ENCODE measurements at regions of chr3 and their contacts with region 1.

Region 1: GRCh38 chr3:15205934-15206661 is at the start of gene CAPN7:
- DNase-seq: peak; percentile 96
- ATAC-seq: peak; percentile 90
- H3K4me3 ChIP-seq: peak within 1 kb of the TSS; percentile 92
- H3K27ac ChIP-seq: peak within 1 kb of the TSS; percentile 28
- H3K4me1 ChIP-seq: peaks cover 27% of the 10 kb centered on the region
- H3K27me3 ChIP-seq: no peaks in the 10 kb centered on the region
- CTCF ChIP-seq: peak; percentile 46
- total RNA-seq, gene CAPN7: 30.2 and 32.7 TPM in 2 replicates

Region 2: DNA sequence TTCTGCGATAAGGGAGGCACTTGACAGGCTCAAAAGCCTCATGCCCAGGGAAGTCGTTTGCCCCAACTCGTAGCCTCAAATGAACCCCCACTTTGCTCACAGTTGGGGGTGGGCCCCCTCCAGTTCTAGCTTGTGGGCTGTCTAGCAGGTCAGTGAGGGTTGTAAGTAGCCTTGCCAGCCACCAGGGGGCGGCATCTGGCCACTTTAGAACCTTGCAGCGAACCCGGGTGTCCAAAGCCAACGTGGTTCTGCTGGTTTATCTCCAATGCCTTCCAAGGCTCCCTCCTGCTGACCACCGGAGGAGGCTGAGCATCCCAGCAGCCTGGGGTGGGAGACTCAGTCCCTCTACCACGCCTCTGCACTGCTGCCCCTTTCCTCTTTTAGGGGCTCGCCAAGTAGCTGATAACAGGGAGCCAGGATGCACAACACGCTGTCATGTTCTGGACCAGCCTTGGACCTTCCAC is 98.0 kb before region 1 on chr3:
- CTCF ChIA-PET with region 1: interaction called, 5 read pairs
- POLR2A ChIA-PET with region 1: no interaction called
- intact Hi-C with region 1: loop called (anchors 5 kb)
- DNase-seq: peak; percentile 78
- ATAC-seq: peak; percentile 94
- H3K4me3 ChIP-seq: no peak overlapping the region
- H3K27ac ChIP-seq: no peak overlapping the region
- H3K4me1 ChIP-seq: peaks cover under 1% of the 10 kb centered on the region; the same call in 1 of the 2 replicates
- H3K27me3 ChIP-seq: no peaks in the 10 kb centered on the region
- CTCF ChIP-seq: peak; percentile 92

Region 3: DNA sequence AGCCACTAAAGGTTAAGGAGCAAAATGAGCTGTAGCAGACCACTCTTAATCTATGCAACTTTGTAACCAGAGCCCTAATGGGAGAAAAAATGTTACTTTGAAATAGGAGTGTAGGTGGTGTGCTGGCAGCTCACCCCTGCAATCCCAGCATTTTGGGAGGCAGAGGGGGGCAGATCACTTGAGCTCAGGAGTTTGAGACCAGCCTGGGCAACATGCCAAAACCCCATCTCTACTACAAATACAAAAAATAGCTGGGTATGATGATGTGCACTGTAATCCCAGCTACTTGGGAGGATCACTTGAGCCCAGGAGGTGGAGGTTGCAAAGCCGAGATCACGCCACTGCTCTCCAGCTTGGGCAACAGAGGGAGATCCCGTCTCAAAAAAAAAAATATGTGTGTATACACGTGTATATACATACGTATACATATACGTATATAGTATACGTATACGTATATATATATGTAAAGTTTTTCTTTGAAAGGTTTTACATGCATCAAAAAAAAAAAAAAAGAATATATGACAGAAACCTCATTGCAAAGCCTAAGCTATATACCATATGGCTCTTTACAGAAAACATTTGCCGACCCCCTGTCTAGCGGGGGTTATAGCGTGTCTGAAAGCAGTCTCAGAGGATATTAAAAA is 15.6 kb after region 1 on chr3:
- CTCF ChIA-PET with region 1: no interaction called
- POLR2A ChIA-PET with region 1: interaction called, 10 read pairs
- intact Hi-C with region 1: no loop called
- DNase-seq: no peak
- ATAC-seq: no peak
- H3K4me3 ChIP-seq: no peak overlapping the region
- H3K27ac ChIP-seq: no peak overlapping the region
- H3K4me1 ChIP-seq: 0 out of 2 replicates have a peak, but pooled peaks cover 5% of the 10 kb centered on the region
- H3K27me3 ChIP-seq: no peaks in the 10 kb centered on the region
- CTCF ChIP-seq: no peak

Region 4: DNA sequence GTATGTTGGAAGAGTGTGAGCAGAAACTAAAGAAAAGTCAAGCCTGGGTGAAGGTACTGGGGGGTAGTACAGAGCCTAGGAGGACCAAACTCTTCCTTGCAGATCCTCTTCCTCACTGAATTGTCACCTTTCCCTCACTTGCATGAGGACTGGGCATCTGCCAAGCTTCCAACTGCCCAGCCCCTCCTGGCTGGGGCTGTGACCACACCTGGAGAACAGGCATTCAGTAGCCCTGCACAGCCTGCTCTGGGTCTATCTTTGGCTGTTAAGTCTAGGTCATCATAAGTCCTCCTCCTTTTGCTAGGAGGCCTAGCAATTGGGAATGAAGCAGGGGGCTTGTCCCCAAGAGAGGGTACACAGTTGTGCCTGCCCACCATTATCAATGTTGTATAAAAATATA is 55.2 kb after region 1 on chr3:
- CTCF ChIA-PET with region 1: no interaction called
- POLR2A ChIA-PET with region 1: interaction called, 17 read pairs
- intact Hi-C with region 1: no loop called
- DNase-seq: peak; percentile 41
- ATAC-seq: peak; percentile 46
- H3K4me3 ChIP-seq: no peak overlapping the region
- H3K27ac ChIP-seq: no peak overlapping the region
- H3K4me1 ChIP-seq: no peaks in the 10 kb centered on the region
- H3K27me3 ChIP-seq: no peaks in the 10 kb centered on the region
- CTCF ChIP-seq: no peak

Region 5: DNA sequence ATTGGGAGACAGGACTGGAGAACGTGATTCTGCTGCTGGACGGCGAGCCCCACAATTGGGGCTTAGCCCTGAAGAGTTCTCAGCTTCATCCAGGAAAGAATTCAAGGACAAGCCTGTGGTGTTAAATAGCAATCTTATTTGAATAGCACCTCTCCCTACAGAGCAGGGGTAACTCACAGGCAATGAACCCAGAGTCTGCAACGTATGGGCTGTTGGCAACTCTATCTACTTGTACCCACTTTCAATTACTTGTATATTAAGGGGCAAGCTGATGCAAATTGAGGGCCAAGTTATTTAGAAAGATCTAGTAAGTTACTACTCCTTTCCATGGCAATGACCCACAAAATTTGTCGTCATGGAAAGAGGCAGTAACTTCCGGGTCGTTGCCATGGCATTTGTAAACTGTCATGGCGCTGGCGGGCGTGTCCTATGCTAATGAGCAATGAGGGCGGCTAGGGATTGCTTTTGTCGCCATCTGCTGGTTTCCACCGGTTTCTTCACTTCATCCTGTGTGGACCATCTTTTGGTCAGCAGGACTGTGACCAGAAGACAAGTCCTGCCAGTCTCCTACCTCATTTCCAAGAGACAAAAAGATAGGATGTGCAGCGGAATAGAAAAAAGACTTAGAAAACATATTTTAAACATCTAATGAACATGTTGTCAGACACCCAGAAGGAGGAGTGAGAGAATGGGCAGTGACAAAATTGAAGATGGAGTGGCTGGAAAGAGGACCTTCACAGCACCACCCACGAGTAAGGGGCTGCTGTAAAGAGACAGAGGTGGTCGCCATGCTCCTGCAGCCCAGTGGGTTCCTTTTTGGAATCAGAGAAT is 172.1 kb after region 1 on chr3:
- CTCF ChIA-PET with region 1: no interaction called
- POLR2A ChIA-PET with region 1: no interaction called
- intact Hi-C with region 1: loop called (anchors 1 kb)
- DNase-seq: peak; percentile 97
- ATAC-seq: peak; percentile 98
- H3K4me3 ChIP-seq: no peak overlapping the region
- H3K27ac ChIP-seq: 0 out of 2 replicates have a peak overlapping the region, but pooled peaks have one; percentile 6
- H3K4me1 ChIP-seq: no peaks in the 10 kb centered on the region
- H3K27me3 ChIP-seq: no peaks in the 10 kb centered on the region
- CTCF ChIP-seq: peak; percentile 92

Region 6: GRCh38 chr3:15405448-15406050 is 199.5 kb after region 1 on chr3:
- CTCF ChIA-PET with region 1: interaction called, 5 read pairs
- POLR2A ChIA-PET with region 1: no interaction called
- intact Hi-C with region 1: loop called (anchors 1 kb)
- DNase-seq: peak; percentile 72
- ATAC-seq: peak; percentile 77
- H3K4me3 ChIP-seq: no peak overlapping the region
- H3K27ac ChIP-seq: no peak overlapping the region
- H3K4me1 ChIP-seq: peaks cover 8% of the 10 kb centered on the region
- H3K27me3 ChIP-seq: no peaks in the 10 kb centered on the region
- CTCF ChIP-seq: peak; percentile 93

Region 7: GRCh38 chr3:15557511-15557946 is 351.4 kb after region 1 on chr3:
- CTCF ChIA-PET with region 1: no interaction called
- POLR2A ChIA-PET with region 1: no interaction called
- intact Hi-C with region 1: loop called (anchors 1 kb)
- DNase-seq: peak; percentile 94
- ATAC-seq: peak; percentile 100
- H3K4me3 ChIP-seq: no peak overlapping the region
- H3K27ac ChIP-seq: no peak overlapping the region
- H3K4me1 ChIP-seq: 0 out of 2 replicates have a peak, but pooled peaks cover 3% of the 10 kb centered on the region
- H3K27me3 ChIP-seq: no peaks in the 10 kb centered on the region
- CTCF ChIP-seq: peak; percentile 80

Measured in PC-3 (cell line).